ENCODE measurements at regions of chr7 and their contacts with region 1.

Region 1: DNA sequence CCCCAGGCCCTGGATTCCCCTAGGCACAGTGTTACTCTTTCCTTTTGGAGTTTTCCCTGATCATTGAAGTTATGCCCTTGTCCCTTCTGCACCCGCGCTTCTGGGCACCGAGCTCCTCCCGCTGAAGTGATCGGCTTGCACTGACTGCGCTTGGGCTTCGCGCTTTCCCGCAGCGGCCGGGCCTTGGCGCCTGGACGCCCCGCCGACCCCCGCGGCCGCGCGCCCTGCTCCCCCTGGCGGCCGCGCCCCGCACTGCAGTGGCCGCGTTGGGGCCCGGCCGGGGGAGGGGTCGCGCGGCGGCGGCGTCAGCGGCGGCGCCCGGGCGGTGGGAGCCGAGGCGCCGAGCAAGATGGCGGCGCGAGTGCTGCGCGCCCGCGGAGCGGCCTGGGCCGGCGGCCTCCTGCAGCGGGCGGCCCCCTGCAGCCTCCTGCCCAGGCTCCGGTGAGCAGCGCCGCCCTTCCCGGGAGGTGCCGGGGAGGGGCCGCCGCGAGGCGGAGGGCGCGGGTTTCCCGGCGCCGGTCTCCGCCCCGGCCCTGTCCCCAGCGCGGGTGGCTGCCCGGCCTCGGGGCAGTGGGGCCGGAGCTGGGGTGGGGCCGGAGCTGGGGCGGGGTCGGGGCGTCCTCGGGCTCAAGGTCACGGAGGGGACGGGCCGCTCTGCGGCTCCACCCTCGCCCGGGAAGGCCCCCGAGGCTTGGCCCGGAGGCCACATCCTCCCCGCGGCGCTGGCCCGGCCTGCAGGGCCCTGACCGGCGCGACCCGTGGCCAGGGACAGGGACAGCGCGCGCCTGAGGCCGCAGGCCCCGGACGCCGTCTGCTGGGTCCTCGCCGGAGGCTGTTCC is at the start of gene NIPSNAP2:
- DNase-seq: peak; percentile 80
- ATAC-seq: peak; percentile 90
- H3K4me3 ChIP-seq: peak within 1 kb of the TSS; percentile 48 to 66 (median 58)
- H3K4me3 Mint-ChIP-seq: peak within 1 kb of the TSS; percentile 91
- H3K27ac ChIP-seq: peak within 1 kb of the TSS; percentile 75 to 88
- H3K27ac Mint-ChIP-seq: peak within 1 kb of the TSS; percentile 93
- H3K4me1 ChIP-seq: peaks cover 8 to 16% of the 10 kb centered on the region in 2 donors
- H3K4me1 Mint-ChIP-seq: peaks cover 36% of the 10 kb centered on the region
- H3K27me3 ChIP-seq: no peaks in the 10 kb centered on the region
- H3K27me3 Mint-ChIP-seq: no peaks in the 10 kb centered on the region
- CTCF ChIP-seq: peak; percentile 58
- total RNA-seq, gene NIPSNAP2: 40.4 and 42.6 TPM in 2 replicates

Region 2: GRCh38 chr7:54758702-54759592 is 1205.5 kb before region 1 on chr7 and contains the start of gene SEC61G:
- CTCF ChIA-PET with region 1: no interaction called
- POLR2A ChIA-PET with region 1: no interaction called
- intact Hi-C with region 1: loop called (anchors 2 kb)
- DNase-seq: peak; percentile 96
- ATAC-seq: peak; percentile 97
- H3K4me3 ChIP-seq: peak within 1 kb of the TSS; percentile 63 to 94 (median 89)
- H3K4me3 Mint-ChIP-seq: peak within 1 kb of the TSS; percentile 100
- H3K27ac ChIP-seq: peak within 1 kb of the TSS; percentile 78 to 80
- H3K27ac Mint-ChIP-seq: peak within 1 kb of the TSS; percentile 96
- H3K4me1 ChIP-seq: peaks cover 10 to 21% of the 10 kb centered on the region in 2 donors
- H3K4me1 Mint-ChIP-seq: peaks cover 27% of the 10 kb centered on the region
- H3K27me3 ChIP-seq: no peaks in the 10 kb centered on the region
- H3K27me3 Mint-ChIP-seq: peaks cover 2% of the 10 kb centered on the region
- CTCF ChIP-seq: no peak
- total RNA-seq, gene SEC61G: 23.6 and 26.8 TPM in 2 replicates

Region 3: DNA sequence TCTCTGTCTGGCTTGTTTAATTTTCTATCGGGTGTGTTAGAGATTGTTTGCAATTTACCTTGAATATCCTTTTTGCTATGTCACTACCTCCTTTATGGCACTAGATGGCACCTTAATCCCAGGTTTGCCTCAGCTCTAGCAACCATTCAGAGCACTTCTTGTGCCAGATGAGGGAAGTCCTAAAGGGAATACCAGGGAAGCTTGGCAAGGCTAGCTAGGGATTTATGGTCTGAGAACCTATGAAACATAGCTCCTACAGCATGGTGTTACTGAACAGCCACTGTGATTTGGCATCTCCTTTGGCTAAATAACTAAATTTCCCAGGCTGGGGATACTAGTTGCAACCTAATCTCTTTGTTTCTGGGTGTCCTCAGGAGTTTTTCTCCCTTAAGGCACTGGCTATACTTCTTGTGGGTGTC is 323.2 kb before region 1 on chr7:
- CTCF ChIA-PET with region 1: interaction called, 25 read pairs
- POLR2A ChIA-PET with region 1: interaction called, 3 read pairs
- intact Hi-C with region 1: no loop called
- DNase-seq: peak; percentile 74
- ATAC-seq: peak; percentile 79
- H3K4me3 ChIP-seq: no peak overlapping the region
- H3K4me3 Mint-ChIP-seq: no peak overlapping the region
- H3K27ac ChIP-seq: no peak overlapping the region
- H3K27ac Mint-ChIP-seq: no peak overlapping the region
- H3K4me1 ChIP-seq: peaks cover 5 to 7% of the 10 kb centered on the region in 2 donors
- H3K4me1 Mint-ChIP-seq: peaks cover 5% of the 10 kb centered on the region
- H3K27me3 ChIP-seq: no peaks in the 10 kb centered on the region
- H3K27me3 Mint-ChIP-seq: peaks cover 4% of the 10 kb centered on the region
- CTCF ChIP-seq: peak; percentile 90

Region 4: DNA sequence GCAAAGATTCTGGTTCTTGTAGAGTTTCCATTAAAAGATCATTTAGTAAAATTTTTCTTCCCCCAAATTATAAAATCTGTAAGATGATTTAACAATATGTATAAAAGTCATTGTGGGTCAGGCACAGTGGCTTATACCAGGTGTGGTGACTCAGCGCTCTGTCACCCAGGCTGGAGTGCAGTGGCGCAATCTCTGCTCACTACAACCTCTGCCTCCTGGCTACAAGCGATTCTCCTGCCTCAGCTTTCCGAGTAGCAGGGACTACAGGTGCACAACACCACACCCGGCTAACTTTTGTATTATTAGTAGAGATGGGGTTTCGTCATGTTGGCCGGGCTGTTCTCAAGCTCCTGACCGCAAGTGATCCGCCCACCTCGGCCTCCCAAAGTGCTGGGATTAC is 170.0 kb before region 1 on chr7:
- CTCF ChIA-PET with region 1: no interaction called
- POLR2A ChIA-PET with region 1: no interaction called
- intact Hi-C with region 1: no loop called
- DNase-seq: no peak
- ATAC-seq: no peak
- H3K4me3 ChIP-seq: no peak overlapping the region
- H3K4me3 Mint-ChIP-seq: no peak overlapping the region
- H3K27ac ChIP-seq: no peak overlapping the region
- H3K27ac Mint-ChIP-seq: no peak overlapping the region
- H3K4me1 ChIP-seq: no peaks in the 10 kb centered on the region
- H3K4me1 Mint-ChIP-seq: no peaks in the 10 kb centered on the region
- H3K27me3 ChIP-seq: no peaks in the 10 kb centered on the region
- H3K27me3 Mint-ChIP-seq: no peaks in the 10 kb centered on the region
- CTCF ChIP-seq: no peak

Region 5: DNA sequence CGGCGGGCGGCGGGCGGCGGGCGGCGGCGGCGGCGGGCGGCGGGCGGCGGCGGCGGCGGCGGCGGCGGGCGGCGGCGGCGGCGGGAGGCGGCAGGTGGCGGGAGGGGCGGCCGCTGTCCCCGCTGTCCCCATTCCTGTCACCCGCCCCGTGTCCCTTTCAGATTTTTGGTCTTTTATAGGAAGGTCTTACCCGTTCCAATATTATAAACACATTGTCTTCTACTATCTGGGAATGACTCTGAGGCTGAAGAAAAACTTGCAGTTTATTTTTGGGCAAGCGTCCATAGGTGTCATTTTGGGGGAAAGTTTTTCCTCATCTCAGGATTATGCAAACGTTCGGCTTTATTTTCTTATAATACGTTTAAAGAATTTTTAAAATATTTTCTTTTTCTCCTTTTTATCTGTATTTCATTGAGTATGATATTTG is 76.6 kb before region 1 on chr7:
- CTCF ChIA-PET with region 1: no interaction called
- POLR2A ChIA-PET with region 1: no interaction called
- intact Hi-C with region 1: loop called (anchors 2 kb)
- DNase-seq: peak; percentile 34
- ATAC-seq: no peak
- H3K4me3 ChIP-seq: peak overlapping the region; percentile 36 to 70 (median 59)
- H3K4me3 Mint-ChIP-seq: peak overlapping the region; percentile 90
- H3K27ac ChIP-seq: no peak overlapping the region
- H3K27ac Mint-ChIP-seq: peak overlapping the region; percentile 86
- H3K4me1 ChIP-seq: peaks cover 0 to 11% of the 10 kb centered on the region in 2 donors
- H3K4me1 Mint-ChIP-seq: peaks cover 8% of the 10 kb centered on the region
- H3K27me3 ChIP-seq: no peaks in the 10 kb centered on the region
- H3K27me3 Mint-ChIP-seq: peaks cover 4% of the 10 kb centered on the region
- CTCF ChIP-seq: no peak

Measured in B cell (primary cell).